ENCODE measurements at regions of chrX and their contacts with region 1.

Region 1: GRCh38 chrX:39427906-39428305 is 626.6 kb downstream of the MID1IP1 start:
- DNase-seq: peak; percentile 78
- H3K4me3 Mint-ChIP-seq: no peak overlapping the region
- H3K27ac Mint-ChIP-seq: peak overlapping the region; percentile 90
- H3K4me1 Mint-ChIP-seq: peaks cover 56% of the 10 kb centered on the region
- H3K27me3 Mint-ChIP-seq: no peaks in the 10 kb centered on the region

Region 2: DNA sequence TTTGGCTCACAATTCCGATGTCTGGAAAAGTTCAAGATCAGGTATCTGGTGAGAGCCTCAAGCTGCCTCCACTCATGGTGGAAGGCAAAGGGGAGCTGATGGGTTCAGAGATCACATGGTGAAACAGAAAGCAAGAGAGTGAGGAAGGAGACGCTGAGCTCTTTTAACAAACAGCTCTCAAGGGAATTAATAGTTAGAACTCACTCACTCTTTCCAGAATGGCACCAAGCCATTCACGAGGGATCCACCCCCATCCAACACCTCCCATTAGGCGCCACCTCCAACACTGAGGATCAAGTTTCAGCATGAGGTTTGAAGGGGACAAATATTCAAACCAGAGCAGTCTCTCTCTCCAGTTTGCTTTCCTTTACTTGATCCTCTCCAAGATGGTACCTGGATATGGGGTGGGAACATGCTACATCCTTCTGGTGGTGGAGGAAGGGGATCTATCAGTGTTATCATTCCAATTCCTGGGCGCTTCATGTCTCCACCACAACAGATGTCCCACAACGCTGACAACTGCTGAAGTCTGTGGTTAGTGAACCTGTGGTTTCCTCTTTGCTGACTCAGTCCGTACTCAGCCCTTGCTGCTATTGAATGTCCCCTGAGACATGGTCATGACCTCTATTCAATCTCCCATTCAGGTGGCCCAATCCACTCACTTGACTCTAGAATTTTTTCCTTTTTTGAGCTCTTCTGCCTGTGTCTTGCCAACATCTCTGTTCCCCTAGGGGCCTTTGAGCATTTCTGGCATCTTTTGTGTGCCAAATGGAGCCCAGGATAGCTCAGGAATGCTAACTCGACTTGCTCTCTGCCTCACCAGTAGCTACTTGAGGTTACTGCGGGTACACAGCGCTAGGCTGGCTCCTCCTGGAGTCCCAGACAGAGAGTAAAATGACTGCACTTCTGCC is 231.5 kb before region 1 on chrX:
- CTCF ChIA-PET with region 1: no interaction called
- POLR2A ChIA-PET with region 1: no interaction called
- intact Hi-C with region 1: loop called (anchors 10 kb)
- DNase-seq: peak; percentile 75
- H3K4me3 Mint-ChIP-seq: peak overlapping the region; percentile 32
- H3K27ac Mint-ChIP-seq: peak overlapping the region; percentile 86
- H3K4me1 Mint-ChIP-seq: peaks cover 49% of the 10 kb centered on the region
- H3K27me3 Mint-ChIP-seq: peaks cover 2% of the 10 kb centered on the region

Region 3: GRCh38 chrX:39261446-39262147 is 166.3 kb before region 1 on chrX:
- CTCF ChIA-PET with region 1: interaction called, 4 read pairs
- POLR2A ChIA-PET with region 1: no interaction called
- intact Hi-C with region 1: loop called (anchors 1 kb)
- DNase-seq: peak; percentile 15
- H3K4me3 Mint-ChIP-seq: no peak overlapping the region
- H3K27ac Mint-ChIP-seq: peak overlapping the region; percentile 80
- H3K4me1 Mint-ChIP-seq: peaks cover 54% of the 10 kb centered on the region
- H3K27me3 Mint-ChIP-seq: no peaks in the 10 kb centered on the region

Region 4: GRCh38 chrX:39309018-39309635 is 118.8 kb before region 1 on chrX:
- CTCF ChIA-PET with region 1: no interaction called
- POLR2A ChIA-PET with region 1: no interaction called
- intact Hi-C with region 1: loop called (anchors 1 kb)
- DNase-seq: peak; percentile 79
- H3K4me3 Mint-ChIP-seq: no peak overlapping the region
- H3K27ac Mint-ChIP-seq: peak overlapping the region; percentile 100
- H3K4me1 Mint-ChIP-seq: peaks cover 78% of the 10 kb centered on the region
- H3K27me3 Mint-ChIP-seq: no peaks in the 10 kb centered on the region

Region 5: DNA sequence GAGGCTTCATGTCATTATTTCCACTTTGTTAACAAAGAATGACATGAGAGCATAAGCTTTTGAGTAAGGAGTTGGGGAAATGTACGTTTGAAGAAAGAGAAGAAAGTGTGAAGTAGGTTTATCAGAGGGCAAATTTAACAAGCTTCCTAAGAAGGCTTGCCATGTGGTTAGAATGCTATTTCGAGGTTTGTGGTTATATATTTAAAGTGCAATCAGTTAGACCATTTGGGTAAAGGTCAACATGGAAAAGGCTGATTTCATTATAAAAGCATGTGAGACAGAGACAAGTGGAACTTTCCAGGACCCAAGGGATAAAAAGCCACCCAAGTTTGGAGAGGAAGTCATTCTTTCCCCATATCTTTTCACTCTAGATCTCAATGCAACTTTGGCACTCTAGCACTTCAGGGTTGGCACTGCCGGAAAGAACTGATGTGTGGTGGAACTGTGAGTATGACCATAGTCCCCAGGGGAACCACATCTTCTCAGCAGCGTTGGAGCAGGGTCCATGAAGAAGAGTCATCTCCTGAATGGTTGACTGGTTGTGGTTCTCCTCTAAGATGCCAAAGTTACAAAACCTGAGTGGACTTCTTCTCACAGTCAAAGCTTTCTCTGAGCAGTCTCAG is 96.7 kb before region 1 on chrX:
- CTCF ChIA-PET with region 1: no interaction called
- POLR2A ChIA-PET with region 1: interaction called, 5 read pairs
- intact Hi-C with region 1: loop called (anchors 1 kb)
- DNase-seq: peak; percentile 73
- H3K4me3 Mint-ChIP-seq: no peak overlapping the region
- H3K27ac Mint-ChIP-seq: peak overlapping the region; percentile 88
- H3K4me1 Mint-ChIP-seq: peaks cover 71% of the 10 kb centered on the region
- H3K27me3 Mint-ChIP-seq: no peaks in the 10 kb centered on the region

Region 6: GRCh38 chrX:39453889-39454621 is 26.1 kb after region 1 on chrX:
- CTCF ChIA-PET with region 1: no interaction called
- POLR2A ChIA-PET with region 1: no interaction called
- intact Hi-C with region 1: no loop called
- DNase-seq: no peak
- H3K4me3 Mint-ChIP-seq: no peak overlapping the region
- H3K27ac Mint-ChIP-seq: no peak overlapping the region
- H3K4me1 Mint-ChIP-seq: peaks cover 12% of the 10 kb centered on the region
- H3K27me3 Mint-ChIP-seq: no peaks in the 10 kb centered on the region

Region 7: DNA sequence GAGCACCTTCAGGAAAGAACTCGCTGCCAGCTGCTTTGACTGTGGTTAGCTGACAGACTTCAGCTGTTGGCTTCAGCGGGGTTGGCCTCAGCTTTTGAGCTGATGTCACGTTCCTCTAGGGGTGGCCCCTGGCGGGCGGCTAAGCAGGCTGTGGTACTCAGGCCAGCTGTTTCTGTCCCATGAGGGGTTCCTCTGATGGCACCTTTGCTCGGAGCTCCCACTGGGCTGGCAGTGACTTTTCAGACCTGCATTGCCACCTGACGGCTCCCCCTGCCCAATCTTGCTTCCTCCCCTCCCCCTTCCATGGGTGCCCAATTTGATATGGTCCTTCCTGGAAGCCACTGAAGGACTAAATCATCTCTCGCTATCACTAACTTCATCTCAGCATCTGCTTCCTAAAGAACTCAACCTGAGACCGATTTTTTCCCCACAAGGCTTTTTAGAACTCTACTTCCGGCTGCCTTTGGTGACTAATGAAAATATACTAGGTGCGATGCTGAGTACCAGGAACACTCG is 150.5 kb after region 1 on chrX:
- CTCF ChIA-PET with region 1: no interaction called
- POLR2A ChIA-PET with region 1: no interaction called
- intact Hi-C with region 1: loop called (anchors 1 kb)
- DNase-seq: peak; percentile 84
- H3K4me3 Mint-ChIP-seq: peak overlapping the region; percentile 16
- H3K27ac Mint-ChIP-seq: peak overlapping the region; percentile 91
- H3K4me1 Mint-ChIP-seq: peaks cover 23% of the 10 kb centered on the region
- H3K27me3 Mint-ChIP-seq: no peaks in the 10 kb centered on the region

Region 8: DNA sequence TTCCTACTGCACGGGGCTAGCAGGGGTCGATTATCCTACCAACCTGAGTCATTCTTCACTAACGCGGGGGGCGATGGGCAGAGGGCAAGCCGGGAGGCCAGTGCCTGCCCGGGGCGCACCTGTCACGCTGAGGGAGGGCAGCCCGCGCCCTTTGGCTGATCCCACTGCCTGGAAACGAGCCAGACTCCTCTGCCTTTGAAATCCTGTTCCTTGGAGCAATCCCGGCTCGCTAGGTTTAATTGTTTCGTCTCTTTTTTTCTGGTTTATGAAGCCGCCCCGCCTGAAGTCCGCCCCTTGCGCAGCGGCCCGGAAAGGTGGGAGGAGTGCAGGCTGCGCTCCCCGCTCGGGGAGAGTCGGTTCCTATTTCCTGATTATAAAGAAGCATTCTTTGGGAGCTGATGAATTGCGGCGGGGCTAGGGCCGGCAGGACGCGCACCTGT is 185.6 kb after region 1 on chrX:
- CTCF ChIA-PET with region 1: no interaction called
- POLR2A ChIA-PET with region 1: no interaction called
- intact Hi-C with region 1: loop called (anchors 2 kb)
- DNase-seq: peak; percentile 35
- H3K4me3 Mint-ChIP-seq: peak overlapping the region; percentile 78
- H3K27ac Mint-ChIP-seq: peak overlapping the region; percentile 95
- H3K4me1 Mint-ChIP-seq: peaks cover 29% of the 10 kb centered on the region
- H3K27me3 Mint-ChIP-seq: no peaks in the 10 kb centered on the region

Measured in activated CD4-positive, alpha-beta memory T cell treated with anti-CD3 and anti-CD28 coated beads for 36 hours (primary cell).